HEK293T (cell line): ENCODE measurements at regions of chr16 and their contacts with region 1.

Region 1: DNA sequence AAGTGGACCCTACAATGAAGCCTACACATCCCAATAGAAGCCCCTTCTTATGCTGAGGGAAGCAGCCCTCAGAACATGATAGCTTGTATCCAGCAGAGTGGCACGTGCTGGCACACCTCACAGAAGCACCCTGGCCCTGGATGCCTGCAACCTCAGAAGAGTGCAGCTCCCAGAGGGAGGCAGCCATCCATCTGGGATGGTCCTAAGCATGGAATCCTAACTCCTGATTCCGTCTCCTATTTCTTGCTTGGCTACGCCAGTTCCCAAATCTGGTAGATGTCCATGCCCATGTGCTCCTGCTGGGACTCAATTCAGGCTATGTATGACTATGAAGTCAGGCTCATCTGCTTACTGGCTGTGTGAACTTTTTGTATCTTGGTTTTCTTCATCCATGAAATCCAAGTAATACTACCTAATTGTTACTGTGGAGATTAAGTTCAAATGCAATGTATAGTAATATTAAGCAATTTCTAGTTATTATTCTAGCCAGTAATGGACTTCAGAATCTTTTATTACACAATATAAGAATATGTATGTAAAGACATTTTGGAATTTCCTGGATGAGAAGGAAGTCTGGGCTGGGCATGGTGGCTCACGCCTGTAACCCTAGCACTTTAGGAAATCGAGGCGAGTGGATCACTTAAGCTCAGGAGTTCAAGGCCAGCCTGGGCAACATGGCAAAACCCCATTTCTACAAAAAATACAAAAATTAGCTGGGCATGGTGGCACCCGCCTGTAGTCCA is 32.4 kb downstream of the SIAH1 start:
- DNase-seq: no peak

Region 2: DNA sequence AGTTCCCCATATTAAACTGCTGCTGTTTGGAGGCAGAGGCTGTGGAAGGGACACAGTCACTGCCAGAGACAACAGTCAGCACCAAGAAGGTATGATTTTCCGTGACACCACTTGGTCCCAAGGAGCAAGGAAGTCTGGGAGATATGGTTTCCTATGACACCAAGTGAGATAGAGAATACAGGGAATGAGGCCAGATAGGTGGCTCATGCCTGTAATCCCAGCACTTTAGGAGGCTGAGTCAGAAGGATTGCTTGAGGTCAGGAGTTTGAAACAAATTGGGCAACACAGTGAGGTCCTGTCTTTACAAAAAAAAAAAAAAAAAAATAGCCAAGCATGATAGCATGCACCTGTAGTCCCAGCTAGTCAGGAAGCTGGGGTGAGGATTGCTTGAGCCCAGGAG is 287.8 kb before region 1 on chr16:
- CTCF ChIA-PET with region 1: no interaction called
- POLR2A ChIA-PET with region 1: no interaction called
- DNase-seq: no peak

Region 3: GRCh38 chr16:48365581-48366164 is 12.9 kb after region 1 on chr16:
- CTCF ChIA-PET with region 1: interaction called, 3 read pairs
- POLR2A ChIA-PET with region 1: interaction called, 10 read pairs
- DNase-seq: peak; percentile 82

Region 4: GRCh38 chr16:48623304-48624016 is 270.6 kb after region 1 on chr16:
- CTCF ChIA-PET with region 1: interaction called, 16 read pairs
- POLR2A ChIA-PET with region 1: no interaction called
- DNase-seq: peak; percentile 88